Heart left ventricle (tissue), 16 donors: ENCODE measurements at regions of chr5 and their contacts with region 1.

Region 1: DNA sequence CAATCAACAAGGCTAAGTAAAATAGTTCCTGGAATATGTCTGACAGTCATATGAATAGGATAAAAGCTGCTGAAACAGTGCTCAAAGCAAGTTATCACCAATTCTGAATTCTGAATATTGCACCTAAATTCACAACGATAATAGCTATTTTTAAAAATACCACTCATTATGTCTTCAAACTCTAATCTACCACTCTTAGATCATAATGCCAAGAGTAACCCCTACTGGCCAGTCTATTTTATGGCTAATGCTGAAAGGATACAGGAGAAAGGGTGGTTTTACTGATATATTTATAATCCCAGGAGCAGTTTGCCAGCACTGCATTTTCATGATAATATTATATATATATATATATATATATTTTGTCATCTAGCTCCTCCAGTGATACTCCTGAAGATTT is 232.8 kb downstream of the PDE4D start:
- DNase-seq: no peak
- ATAC-seq: no peak
- H3K4me3 ChIP-seq: no peak overlapping the region
- H3K27ac ChIP-seq: no peak overlapping the region
- H3K4me1 ChIP-seq: peaks cover 0 to 7% (median 0%) of the 10 kb centered on the region in 12 donors
- H3K27me3 ChIP-seq: no peaks in the 10 kb centered on the region
- CTCF ChIP-seq: peak in 7 of 12 donors; percentile 7 to 45 (median 35)
- POLR2A ChIP-seq: no peak

Region 2: GRCh38 chr5:59188419-59189225 is 472.1 kb before region 1 on chr5:
- intact Hi-C with region 1: loop called in 2 of 10 experiments (anchors 10 kb)
- DNase-seq: peak; percentile 62 to 80 (median 73)
- ATAC-seq: peak; percentile 58 to 83 (median 80)
- H3K4me3 ChIP-seq: peak overlapping the region in 10 of 12 donors; percentile 2 to 51 (median 34)
- H3K27ac ChIP-seq: peak overlapping the region in 6 of 12 donors; percentile 14 to 76 (median 20)
- H3K4me1 ChIP-seq: peaks cover 0 to 29% (median 0%) of the 10 kb centered on the region in 12 donors
- H3K27me3 ChIP-seq: no peaks in the 10 kb centered on the region
- CTCF ChIP-seq: peak; percentile 77 to 92 (median 83)
- POLR2A ChIP-seq: no peak

Region 3: DNA sequence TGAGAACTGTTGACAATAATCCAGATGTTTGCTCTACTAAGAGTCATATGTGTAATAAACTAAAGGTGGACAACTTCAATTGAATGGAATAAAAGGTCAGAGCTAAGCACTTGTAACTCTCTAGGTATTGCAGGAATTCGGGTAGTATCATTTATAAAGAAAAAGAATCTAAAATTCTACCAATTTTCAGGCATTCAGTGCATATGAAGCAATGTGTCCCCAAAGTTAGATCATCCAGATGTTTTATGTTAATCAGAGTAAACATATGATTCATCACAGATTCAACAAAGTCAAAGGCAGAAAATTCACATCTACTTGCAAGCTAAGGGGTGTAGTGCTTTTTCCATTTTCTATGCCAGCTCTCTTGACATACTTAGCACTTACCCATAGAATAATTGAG is 244.3 kb before region 1 on chr5:
- intact Hi-C with region 1: loop called in 1 of 10 experiments (anchors 10 kb)
- DNase-seq: no peak
- ATAC-seq: peak in 1 of 4 donors; percentile 42
- H3K4me3 ChIP-seq: no peak overlapping the region
- H3K27ac ChIP-seq: no peak overlapping the region
- H3K4me1 ChIP-seq: peaks cover 0 to 3% (median 0%) of the 10 kb centered on the region in 12 donors
- H3K27me3 ChIP-seq: no peaks in the 10 kb centered on the region
- CTCF ChIP-seq: no peak
- POLR2A ChIP-seq: no peak